Lower leg skin (tissue), 4 donors: ENCODE measurements at regions of chrX and their contacts with region 1.

Region 1: DNA sequence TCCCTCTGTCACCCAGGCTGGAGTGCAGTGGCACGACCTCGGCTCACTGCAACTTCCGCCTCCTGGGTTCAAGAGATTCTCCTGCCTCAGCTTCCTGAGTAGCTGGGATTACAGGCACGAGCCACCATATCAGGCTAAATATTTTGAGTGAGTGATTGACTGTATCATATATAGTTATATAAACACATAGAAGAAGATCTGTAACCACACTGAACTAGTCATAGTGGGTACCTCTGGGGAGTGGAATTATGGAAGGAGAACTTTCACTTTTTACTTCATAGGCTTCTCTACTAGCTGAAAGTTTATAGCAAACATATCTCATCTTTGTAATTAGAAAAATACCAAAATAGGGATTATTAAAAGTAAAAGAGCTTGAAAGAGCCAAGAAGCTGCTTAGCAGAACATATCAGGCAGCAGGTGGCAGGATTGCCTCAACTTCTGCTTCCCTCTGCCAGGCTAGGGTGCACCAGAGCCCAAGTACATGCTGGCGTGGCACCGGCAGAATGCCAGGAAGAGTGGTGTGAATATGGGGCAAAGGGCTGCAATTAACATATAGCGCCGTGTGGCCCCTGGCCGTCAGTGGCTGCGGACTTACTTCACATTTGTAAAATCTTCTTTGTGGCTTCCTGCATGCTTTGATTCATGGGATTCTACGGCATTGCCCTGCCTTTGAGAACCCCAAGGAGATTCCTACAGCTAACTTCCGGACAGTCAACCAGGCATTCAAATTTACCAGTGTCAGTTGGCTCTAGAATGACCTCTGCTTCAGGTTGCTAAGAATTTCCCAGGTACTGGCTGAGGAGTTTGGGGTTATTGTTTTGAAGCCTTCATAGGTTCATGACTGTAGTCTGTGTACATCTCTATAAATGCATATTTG is 39.4 kb upstream of the CD40LG start:
- DNase-seq: peak in 1 of 2 donors; percentile 12
- H3K4me3 ChIP-seq: no peak overlapping the region
- CTCF ChIP-seq: no peak
- POLR2A ChIP-seq: no peak

Region 2: GRCh38 chrX:136635235-136635634 is 26.7 kb after region 1 on chrX:
- intact Hi-C with region 1: no loop called
- DNase-seq: no peak
- H3K4me3 ChIP-seq: no peak overlapping the region
- CTCF ChIP-seq: no peak
- POLR2A ChIP-seq: no peak

Region 3: GRCh38 chrX:136674270-136674985 is 65.9 kb after region 1 on chrX:
- intact Hi-C with region 1: no loop called
- DNase-seq: no peak
- H3K4me3 ChIP-seq: no peak overlapping the region
- CTCF ChIP-seq: no peak
- POLR2A ChIP-seq: no peak

Region 4: DNA sequence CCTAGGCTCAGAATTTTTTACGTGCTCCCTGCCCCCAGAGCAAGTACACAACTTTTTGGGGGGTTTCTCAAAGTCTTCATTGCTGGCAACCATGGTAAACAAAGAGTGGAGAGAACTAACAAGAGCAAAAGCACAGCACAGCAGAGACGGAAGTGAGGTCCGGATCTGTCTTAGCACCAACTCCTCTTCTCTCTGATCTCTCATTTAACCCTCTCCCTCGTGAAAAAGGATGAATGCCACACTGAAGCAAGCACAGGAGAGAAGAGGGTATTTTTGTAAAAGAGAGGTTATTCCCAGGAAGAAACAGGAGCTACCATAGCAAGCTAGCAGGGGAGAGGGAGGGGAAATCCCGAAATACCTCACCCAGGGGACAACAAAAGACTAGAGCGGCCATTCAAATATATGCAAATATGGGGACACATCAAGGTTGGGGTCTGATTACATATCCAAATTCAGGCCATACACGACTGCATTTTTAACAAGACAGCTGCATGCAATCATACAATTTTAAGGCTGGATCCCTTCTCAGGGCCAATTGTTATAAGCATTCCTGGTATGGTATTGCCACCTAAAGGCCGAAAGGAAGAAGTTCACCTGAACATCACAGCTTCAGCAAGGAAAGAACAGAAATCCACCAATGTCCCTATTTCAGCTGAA is 86.0 kb after region 1 on chrX:
- intact Hi-C with region 1: loop called (anchors 10 kb)
- DNase-seq: no peak
- H3K4me3 ChIP-seq: no peak overlapping the region
- CTCF ChIP-seq: no peak
- POLR2A ChIP-seq: no peak